WTC11 (cell line): ENCODE measurements at regions of chr2 and their contacts with region 1.

Region 1: DNA sequence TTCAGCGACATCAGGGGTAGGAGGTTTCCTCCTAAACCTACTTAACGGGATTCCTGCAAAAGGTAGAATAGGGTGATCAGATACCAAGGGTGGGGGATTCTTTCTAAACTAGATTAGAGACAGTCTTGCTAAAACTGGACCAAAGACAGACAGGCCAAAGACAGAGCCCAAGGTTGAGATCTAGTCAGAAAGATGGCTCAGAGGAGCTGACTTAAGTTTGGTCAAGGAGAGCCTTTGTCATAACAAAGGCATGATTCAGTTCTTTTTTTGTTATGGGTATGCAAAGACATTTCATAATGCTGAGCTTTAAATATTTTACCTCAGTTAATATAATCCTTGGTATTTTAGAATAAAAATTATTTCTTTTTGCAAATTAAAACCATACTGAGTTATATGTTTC is 17.8 kb upstream of the GPR75 start:
- DNase-seq: no peak
- ATAC-seq: no peak
- H3K4me3 Mint-ChIP-seq: no peak overlapping the region
- H3K27ac Mint-ChIP-seq: peak overlapping the region; percentile 19; the same call in 1 of the 2 replicates
- H3K4me1 Mint-ChIP-seq: 0 out of 2 replicates have a peak, but pooled peaks cover 3% of the 10 kb centered on the region
- H3K27me3 Mint-ChIP-seq: no peaks in the 10 kb centered on the region
- CTCF ChIP-seq: no peak

Region 2: GRCh38 chr2:54009549-54009948 is 132.0 kb after region 1 on chr2:
- CTCF ChIA-PET with region 1: no interaction called
- POLR2A ChIA-PET with region 1: interaction called, 11 read pairs
- DNase-seq: no peak
- ATAC-seq: no peak
- H3K4me3 Mint-ChIP-seq: no peak overlapping the region
- H3K27ac Mint-ChIP-seq: no peak overlapping the region
- H3K4me1 Mint-ChIP-seq: no peaks in the 10 kb centered on the region
- H3K27me3 Mint-ChIP-seq: no peaks in the 10 kb centered on the region
- CTCF ChIP-seq: no peak

Region 3: DNA sequence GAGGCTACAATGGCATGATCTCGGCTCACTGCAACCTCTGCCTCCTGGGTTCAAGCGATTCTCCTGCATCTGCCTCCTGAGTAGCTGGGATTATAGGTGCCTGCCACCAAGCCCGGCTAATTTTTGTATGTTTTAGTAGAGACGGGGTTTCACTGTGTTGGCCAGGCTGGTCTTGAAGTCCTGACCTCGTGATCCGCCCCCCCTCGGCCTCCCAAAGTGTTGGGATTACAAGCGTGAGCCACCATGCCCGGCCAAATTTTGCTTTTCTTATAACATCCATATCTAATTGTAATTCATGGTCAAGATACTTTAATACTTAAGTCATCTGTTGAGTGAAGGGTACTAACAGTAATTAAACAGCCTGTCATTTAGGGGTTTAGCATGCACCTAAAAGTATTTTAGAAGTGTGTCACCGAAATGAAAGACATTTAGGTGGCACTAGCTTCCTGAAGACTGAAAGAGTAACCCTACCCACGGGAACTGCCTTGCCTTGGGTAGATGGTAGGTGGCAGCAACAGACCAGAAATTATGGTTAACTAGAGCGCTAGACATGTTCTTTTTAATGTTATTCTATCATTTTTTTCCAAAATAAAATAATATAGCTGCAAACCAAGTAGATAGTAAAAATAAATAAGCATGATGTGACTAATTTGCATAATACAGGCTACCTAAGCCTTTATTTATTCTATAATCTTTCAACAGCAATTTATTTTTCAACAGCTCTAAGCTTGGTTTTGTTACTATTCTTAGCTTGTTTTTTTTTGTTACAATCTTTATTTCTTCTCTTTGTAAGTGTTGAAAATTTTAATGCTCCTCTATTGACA is 229.3 kb after region 1 on chr2:
- CTCF ChIA-PET with region 1: no interaction called
- POLR2A ChIA-PET with region 1: no interaction called
- DNase-seq: no peak
- ATAC-seq: peak; percentile 45
- H3K4me3 Mint-ChIP-seq: no peak overlapping the region
- H3K27ac Mint-ChIP-seq: peak overlapping the region; percentile 32; the same call in 1 of the 2 replicates
- H3K4me1 Mint-ChIP-seq: peaks cover 8% of the 10 kb centered on the region
- H3K27me3 Mint-ChIP-seq: no peaks in the 10 kb centered on the region
- CTCF ChIP-seq: peak; percentile 31; the same call in 1 of the 2 replicates

Region 4: DNA sequence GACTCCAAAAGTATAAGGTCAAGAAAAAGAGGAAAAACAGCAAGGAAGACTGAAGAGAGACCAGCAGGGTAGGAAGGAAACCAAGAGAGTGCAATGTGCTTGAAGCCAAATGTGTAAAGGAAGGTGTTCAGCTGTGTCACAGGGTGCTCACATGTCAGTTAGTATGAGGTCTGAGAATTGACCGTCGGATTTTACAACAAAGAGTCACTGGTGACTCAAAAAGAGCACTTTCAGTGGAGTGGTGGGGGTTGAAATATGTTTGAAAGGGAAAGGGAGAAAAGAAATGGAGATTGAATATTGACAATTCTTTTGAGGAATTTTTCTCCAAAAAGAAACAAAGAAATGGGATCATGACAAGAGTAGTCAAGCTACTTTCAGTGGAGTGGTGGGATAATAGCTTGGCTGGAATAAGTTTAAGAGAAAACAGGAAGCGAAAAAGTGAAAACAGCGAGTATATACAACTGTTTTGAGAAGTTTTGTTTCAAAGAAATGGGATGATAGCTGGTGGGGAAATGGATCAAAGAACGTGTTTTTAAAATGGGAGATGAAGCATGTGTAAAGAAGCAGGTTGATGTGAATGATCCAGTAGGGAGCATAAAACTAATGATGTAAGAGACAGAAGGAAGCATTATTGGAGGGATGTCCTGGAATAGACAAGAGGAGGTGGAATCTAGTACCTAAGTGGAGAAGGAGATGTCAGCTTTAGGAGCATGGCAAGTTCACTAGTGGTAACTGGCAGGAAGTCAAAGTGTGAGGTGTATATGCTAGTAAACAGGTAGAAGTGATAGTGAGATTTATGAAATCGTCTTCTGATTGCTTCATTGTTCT is 382.1 kb after region 1 on chr2:
- CTCF ChIA-PET with region 1: no interaction called
- POLR2A ChIA-PET with region 1: no interaction called
- DNase-seq: no peak
- ATAC-seq: no peak
- H3K4me3 Mint-ChIP-seq: no peak overlapping the region
- H3K27ac Mint-ChIP-seq: no peak overlapping the region
- H3K4me1 Mint-ChIP-seq: no peaks in the 10 kb centered on the region
- H3K27me3 Mint-ChIP-seq: no peaks in the 10 kb centered on the region
- CTCF ChIP-seq: no peak